BJ (cell line): ENCODE measurements at regions of chr17 and their contacts with region 1.

Region 1: DNA sequence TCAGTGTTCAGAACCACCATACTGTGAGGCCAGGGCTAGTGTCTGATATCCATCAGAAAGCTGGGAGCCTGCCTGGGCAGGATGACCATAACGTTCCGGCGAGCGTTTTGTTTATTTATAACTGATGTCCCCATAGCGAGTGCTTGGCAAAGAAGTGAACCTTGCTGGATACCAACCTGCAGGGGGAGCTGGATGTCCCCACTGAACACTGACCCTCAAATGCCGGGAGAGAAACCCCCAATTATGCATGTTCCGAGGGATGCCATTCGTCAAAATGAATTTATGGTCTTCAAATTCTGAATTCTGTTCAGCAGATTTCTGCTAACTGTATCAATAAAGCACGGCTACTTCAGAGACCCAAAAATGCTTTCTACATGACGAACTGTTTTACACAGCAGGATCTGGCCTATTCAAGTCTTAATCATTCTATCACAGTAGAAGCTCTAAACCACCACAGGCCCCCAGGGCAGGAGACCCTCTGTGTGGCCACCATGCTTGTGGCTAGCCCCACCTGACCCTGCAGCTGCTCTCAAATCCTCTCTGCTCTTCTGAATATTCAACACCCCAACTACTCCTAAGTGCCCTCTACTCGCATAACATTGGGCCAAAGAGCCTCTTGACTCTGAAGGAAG is 15.2 kb downstream of the MED24 start:
- DNase-seq: peak; percentile 69
- H3K4me3 ChIP-seq: no peak overlapping the region
- H3K27me3 ChIP-seq: no peaks in the 10 kb centered on the region
- CTCF ChIP-seq: peak; percentile 91

Region 2: GRCh38 chr17:39929646-39930407 is 109.2 kb before region 1 on chr17:
- CTCF ChIA-PET with region 1: no interaction called
- POLR2A ChIA-PET with region 1: no interaction called
- DNase-seq: peak; percentile 72
- H3K4me3 ChIP-seq: no peak overlapping the region
- H3K27me3 ChIP-seq: no peaks in the 10 kb centered on the region
- CTCF ChIP-seq: no peak

Region 3: GRCh38 chr17:40021451-40021971 is 17.5 kb before region 1 on chr17:
- CTCF ChIA-PET with region 1: interaction called, 70 read pairs
- POLR2A ChIA-PET with region 1: no interaction called
- DNase-seq: peak; percentile 62
- H3K4me3 ChIP-seq: no peak overlapping the region
- H3K27me3 ChIP-seq: no peaks in the 10 kb centered on the region
- CTCF ChIP-seq: no peak

Region 4: GRCh38 chr17:40026816-40027613 is 12.0 kb before region 1 on chr17:
- CTCF ChIA-PET with region 1: interaction called, 70 read pairs
- POLR2A ChIA-PET with region 1: no interaction called
- DNase-seq: no peak
- H3K4me3 ChIP-seq: no peak overlapping the region
- H3K27me3 ChIP-seq: no peaks in the 10 kb centered on the region
- CTCF ChIP-seq: peak; percentile 89

Region 5: DNA sequence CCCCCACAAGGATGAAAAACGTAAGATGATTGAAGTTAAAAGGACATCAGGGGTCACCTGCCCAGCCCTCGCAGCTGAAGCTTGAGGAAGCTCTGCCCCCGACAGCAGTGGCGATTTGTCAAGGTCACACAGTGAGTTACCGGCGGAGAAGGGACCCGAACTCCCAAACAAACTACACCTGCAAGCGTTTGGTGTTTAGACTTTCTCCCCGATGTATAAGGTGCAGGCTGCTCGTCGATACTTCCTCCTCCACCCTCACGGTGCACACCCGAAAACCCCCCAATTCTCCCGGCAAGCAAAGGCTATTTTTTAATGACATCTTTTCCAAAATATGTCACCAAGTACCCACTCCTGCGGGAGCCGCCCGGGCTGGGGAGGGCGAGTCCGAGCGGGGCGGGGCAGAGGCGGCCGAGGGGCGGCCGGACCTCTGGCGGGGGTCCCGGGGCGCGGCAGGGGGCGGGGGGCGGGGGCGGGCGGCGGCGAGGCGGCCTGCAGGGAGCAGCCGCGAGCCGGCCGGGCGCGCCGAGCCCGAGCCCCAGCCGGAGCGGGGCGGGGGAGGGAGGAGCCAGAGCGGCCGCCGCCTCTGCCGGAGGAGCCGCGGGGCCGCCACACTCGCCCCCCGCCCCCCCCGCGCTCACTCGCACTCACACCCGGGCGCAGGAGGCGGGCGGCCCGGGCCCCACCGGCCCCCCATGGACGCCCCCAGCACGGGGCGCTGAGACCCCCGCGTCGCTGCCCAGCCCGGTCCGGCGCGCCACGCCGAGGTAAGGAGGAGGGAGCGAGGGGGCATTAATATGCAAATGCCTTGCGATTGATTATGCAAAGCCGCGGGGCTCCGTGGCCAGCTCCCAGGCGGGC is 23.6 kb after region 1 on chr17 and contains the start of gene THRA:
- CTCF ChIA-PET with region 1: interaction called, 14 read pairs
- POLR2A ChIA-PET with region 1: no interaction called
- DNase-seq: no peak
- H3K4me3 ChIP-seq: peak within 1 kb of the TSS; percentile 97
- H3K27me3 ChIP-seq: no peaks in the 10 kb centered on the region
- CTCF ChIP-seq: no peak
- polyA plus RNA-seq, gene THRA: 32.1 and 43.3 TPM in 2 replicates

Region 6: DNA sequence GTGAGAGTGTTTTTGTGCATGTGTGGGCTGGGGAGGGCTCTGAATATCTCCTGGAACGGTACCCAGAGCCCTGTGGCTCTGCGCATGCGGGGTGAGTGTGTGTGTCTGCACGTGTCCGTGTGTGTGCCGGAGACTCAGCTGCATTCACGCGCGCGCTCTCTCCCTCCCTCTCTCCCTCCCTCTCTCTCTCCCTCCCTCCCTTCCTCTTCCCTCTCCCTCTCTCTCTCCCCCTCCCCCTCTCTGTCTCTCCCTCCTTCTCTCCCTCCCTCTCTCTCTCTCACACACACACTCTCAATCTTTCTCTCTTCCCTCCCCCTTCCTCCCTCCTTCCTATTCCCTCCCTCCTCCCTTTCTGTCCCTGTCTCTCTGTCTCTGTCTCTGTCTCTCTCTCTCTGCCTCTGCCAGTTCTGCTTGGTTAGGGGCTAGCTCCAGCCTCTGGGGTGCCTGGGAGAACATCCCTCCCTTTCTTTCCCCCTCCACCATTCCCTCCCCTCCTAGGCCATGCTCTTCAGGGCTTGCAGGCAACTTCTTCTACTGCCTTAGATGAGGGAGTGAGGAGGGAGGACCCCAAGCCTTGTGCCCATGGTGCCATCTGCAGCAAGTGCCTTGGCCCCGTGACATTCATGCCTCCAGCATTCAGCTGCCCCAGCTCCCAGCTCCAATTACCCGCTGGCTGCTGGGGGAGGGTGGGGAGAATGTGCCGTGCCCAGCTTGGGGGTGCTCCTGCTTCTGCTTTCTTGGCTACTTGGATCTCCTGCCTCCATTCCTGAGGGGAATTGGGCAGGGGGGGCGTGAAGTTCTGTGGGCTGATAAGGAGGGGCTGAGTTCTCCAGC is 30.1 kb after region 1 on chr17:
- CTCF ChIA-PET with region 1: interaction called, 14 read pairs
- POLR2A ChIA-PET with region 1: no interaction called
- DNase-seq: peak; percentile 61
- H3K4me3 ChIP-seq: peak overlapping the region; percentile 15
- H3K27me3 ChIP-seq: no peaks in the 10 kb centered on the region
- CTCF ChIP-seq: no peak